ENCODE measurements at regions of chr7 and their contacts with region 1.

Region 1: DNA sequence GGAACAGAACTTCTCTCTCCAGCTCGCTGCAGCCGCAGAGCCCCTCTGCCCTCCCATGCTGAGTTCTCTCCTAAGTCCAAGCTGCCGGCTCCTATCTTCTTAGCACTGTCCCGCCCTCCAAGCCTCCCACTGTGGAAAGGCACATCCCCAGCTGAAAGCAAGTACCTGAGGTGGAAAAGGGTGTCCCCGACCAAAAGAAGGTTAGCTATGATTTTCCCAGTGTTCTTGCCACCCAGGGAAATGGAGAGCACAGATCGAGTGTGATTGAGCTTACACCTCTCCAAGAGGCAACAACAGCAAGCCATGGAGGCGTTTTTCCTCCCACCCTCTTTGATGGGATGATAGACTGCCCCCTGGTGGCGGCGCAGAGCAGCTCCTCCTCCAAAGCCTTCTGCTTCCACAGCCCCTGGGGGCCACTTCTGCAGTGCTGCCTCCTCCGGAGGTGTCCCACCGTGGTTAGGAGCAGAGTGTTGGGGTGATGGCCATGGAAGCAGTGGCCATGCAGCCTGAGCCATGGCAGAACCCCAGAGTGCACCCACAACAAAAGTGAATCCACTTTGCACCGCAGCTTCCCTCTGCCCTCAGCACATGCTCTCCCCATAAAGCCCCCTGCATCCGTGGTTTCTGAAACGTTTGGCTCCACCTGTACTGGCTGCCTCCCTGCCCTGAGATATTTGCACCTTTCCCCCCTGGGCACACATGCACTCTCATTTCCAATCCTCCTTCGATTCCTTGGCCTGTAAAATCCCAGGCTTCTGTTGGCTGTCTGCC is 143.1 kb upstream of the STK17A start:
- ATAC-seq: peak in 4 of 8 experiments; percentile 18 to 86 (median 79)
- H3K4me3 ChIP-seq: no peak overlapping the region
- H3K27ac ChIP-seq: no peak overlapping the region
- H3K4me1 ChIP-seq: no peaks in the 10 kb centered on the region

Region 2: GRCh38 chr7:43192806-43193460 is 246.9 kb before region 1 on chr7:
- in situ Hi-C with region 1: no loop called
- ATAC-seq: peak in 3 of 8 experiments; percentile 62 to 84 (median 78)
- H3K4me3 ChIP-seq: no peak overlapping the region
- H3K27ac ChIP-seq: no peak overlapping the region
- H3K4me1 ChIP-seq: peaks cover 0 to 20% of the 10 kb centered on the region in 2 donors

Region 3: GRCh38 chr7:43260980-43261878 is 178.6 kb before region 1 on chr7:
- in situ Hi-C with region 1: loop called in 1 of 9 experiments (anchors 25 kb)
- ATAC-seq: peak in 6 of 8 experiments; percentile 29 to 97 (median 84)
- H3K4me3 ChIP-seq: no peak overlapping the region
- H3K27ac ChIP-seq: no peak overlapping the region
- H3K4me1 ChIP-seq: no peaks in the 10 kb centered on the region

Measured in motor neuron (in vitro differentiated cells).